ENCODE measurements at regions of chr1 and their contacts with region 1.

Region 1: GRCh38 chr1:149886396-149887195 is 12.8 kb upstream of the BOLA1 start:
- DNase-seq: peak; percentile 71
- ATAC-seq: peak; percentile 65
- H3K4me3 Mint-ChIP-seq: no peak overlapping the region
- H3K27ac Mint-ChIP-seq: no peak overlapping the region
- H3K4me1 Mint-ChIP-seq: peaks cover 4% of the 10 kb centered on the region
- H3K27me3 Mint-ChIP-seq: no peaks in the 10 kb centered on the region
- CTCF ChIP-seq: no peak

Region 2: GRCh38 chr1:149849947-149850360 is 36.6 kb before region 1 on chr1:
- CTCF ChIA-PET with region 1: no interaction called
- POLR2A ChIA-PET with region 1: interaction called, 51 read pairs
- DNase-seq: no peak
- ATAC-seq: no peak
- H3K4me3 Mint-ChIP-seq: peak overlapping the region; percentile 90
- H3K27ac Mint-ChIP-seq: peak overlapping the region; percentile 98
- H3K4me1 Mint-ChIP-seq: peaks cover 47% of the 10 kb centered on the region
- H3K27me3 Mint-ChIP-seq: no peaks in the 10 kb centered on the region
- CTCF ChIP-seq: no peak

Region 3: GRCh38 chr1:149916193-149916897 is 29.7 kb after region 1 on chr1:
- CTCF ChIA-PET with region 1: no interaction called
- POLR2A ChIA-PET with region 1: interaction called, 16 read pairs
- DNase-seq: no peak
- ATAC-seq: no peak
- H3K4me3 Mint-ChIP-seq: peak overlapping the region; percentile 91
- H3K27ac Mint-ChIP-seq: no peak overlapping the region; the same call in 1 of the 2 replicates
- H3K4me1 Mint-ChIP-seq: peaks cover 23% of the 10 kb centered on the region
- H3K27me3 Mint-ChIP-seq: no peaks in the 10 kb centered on the region
- CTCF ChIP-seq: no peak

Region 4: DNA sequence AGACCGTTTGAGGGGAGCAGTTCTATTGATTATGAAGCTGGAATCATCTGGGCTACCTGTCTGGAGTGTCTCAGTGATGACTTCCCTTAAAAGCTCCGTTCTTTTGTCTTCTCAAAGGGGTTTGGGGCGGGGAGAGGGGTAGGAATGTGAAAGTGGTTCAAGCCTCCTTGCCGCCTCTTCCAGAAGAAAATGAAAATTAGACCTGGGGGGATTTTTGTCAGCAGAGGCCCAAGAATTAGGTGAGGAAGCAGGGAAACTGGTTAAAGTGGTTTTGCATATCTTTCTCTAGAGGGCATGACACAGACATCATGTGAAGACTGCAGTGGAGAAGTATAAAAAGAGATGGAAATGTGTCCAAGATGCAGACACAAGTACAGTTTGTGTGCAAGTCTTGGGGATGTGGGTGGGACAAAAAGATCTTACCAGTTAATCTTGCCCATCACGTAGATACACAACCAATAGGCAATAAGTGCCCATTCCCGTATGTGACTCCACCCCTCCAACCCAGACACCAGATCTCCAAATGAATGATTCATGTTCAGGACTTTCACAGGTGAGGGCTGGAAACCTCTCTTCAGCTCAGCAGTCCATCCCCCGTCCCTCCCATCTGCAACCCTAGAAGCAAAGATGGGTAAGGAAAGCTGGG is 50.6 kb after region 1 on chr1:
- CTCF ChIA-PET with region 1: interaction called, 3 read pairs
- POLR2A ChIA-PET with region 1: interaction called, 16 read pairs
- DNase-seq: no peak
- ATAC-seq: peak; percentile 33
- H3K4me3 Mint-ChIP-seq: peak overlapping the region; percentile 77
- H3K27ac Mint-ChIP-seq: peak overlapping the region; percentile 94
- H3K4me1 Mint-ChIP-seq: peaks cover 58% of the 10 kb centered on the region
- H3K27me3 Mint-ChIP-seq: no peaks in the 10 kb centered on the region; the same call in 1 of the 2 replicates
- CTCF ChIP-seq: no peak

Region 5: DNA sequence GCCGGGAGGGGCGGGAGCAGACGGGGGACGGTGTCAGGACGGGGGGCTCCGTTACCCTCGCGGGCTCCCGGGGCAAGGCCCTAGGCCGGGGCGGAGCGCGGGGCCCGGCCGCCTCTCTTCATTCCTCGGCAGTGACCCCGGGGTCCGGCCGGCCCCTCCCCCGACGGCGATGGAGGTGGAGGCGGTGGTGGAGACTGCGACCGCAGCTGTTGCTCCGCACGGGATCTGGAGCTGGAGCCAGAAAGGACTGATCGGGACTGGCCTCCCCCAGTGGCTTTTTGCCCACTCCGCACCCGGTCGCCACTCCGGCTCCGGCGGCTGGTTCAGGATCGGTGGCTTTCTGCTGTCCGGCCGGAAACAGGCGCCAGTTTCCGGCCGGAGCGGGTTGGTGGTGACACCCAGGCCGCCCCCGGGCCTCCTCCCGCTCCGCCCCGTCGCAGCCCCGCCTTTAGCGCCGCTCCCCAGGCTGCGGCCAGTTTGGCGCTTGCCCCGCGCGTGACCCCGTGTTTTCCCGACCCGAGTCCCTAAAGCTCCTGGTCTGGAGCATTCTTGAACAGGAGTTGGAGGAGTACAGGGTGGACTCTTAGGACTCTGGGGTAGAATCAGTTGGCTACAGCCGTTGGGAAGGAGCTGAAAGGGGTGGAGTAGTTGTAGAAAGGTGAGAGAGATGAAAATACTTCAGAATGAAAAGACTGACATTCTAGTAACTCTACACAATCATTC is 124.0 kb after region 1 on chr1 and contains the start of gene OTUD7B:
- CTCF ChIA-PET with region 1: no interaction called
- POLR2A ChIA-PET with region 1: interaction called, 27 read pairs
- DNase-seq: peak; percentile 86
- ATAC-seq: peak; percentile 86
- H3K4me3 Mint-ChIP-seq: peak within 1 kb of the TSS; percentile 94
- H3K27ac Mint-ChIP-seq: peak within 1 kb of the TSS; percentile 98
- H3K4me1 Mint-ChIP-seq: peaks cover 22% of the 10 kb centered on the region
- H3K27me3 Mint-ChIP-seq: no peaks in the 10 kb centered on the region
- CTCF ChIP-seq: no peak
- total RNA-seq, gene OTUD7B: 19.4 to 21.0 TPM (median 19.5 TPM) in 3 replicates

Region 6: GRCh38 chr1:150021191-150021694 is 134.6 kb after region 1 on chr1:
- CTCF ChIA-PET with region 1: no interaction called
- POLR2A ChIA-PET with region 1: no interaction called
- DNase-seq: no peak
- ATAC-seq: no peak
- H3K4me3 Mint-ChIP-seq: no peak overlapping the region
- H3K27ac Mint-ChIP-seq: peak overlapping the region; percentile 43
- H3K4me1 Mint-ChIP-seq: peaks cover 22% of the 10 kb centered on the region
- H3K27me3 Mint-ChIP-seq: no peaks in the 10 kb centered on the region; the same call in 1 of the 2 replicates
- CTCF ChIP-seq: no peak

Region 7: DNA sequence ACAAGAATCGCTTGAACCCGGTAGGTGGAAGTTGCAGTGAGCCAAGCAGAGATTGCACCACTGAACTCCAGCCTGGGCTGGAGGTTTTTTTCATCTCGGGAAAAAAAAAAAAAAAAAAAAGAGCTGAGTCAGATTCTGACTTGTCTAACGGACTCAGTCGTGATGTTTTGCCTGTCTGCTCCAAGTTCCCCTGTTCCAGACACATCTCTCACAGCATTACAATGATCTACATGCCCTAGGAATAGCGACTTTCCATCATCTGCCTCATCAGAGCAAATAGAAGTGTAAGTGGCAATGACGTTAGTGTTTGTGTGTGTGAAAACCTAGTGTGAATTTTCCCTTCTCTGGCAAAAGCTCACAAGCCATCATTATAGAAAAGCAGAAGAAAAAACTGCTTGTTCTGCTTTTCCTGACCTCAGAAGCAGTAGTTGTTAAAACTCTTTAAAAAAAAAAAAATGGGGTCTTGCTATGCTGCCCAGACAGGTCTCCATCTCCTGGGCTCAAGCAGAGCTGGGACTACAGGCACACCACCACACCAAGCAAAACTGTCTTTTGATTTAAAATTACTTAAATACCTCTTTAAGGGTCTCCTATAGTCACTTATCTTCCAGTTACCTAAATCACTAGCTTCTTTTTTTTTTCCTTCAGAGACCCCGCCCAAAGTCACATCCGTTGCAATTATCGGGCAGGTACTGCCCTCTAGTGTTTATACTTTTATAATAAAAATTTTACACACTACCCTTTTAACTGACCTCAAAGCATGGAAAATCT is 300.4 kb after region 1 on chr1:
- CTCF ChIA-PET with region 1: interaction called, 25 read pairs
- POLR2A ChIA-PET with region 1: interaction called, 10 read pairs
- DNase-seq: no peak
- ATAC-seq: peak; percentile 65
- H3K4me3 Mint-ChIP-seq: no peak overlapping the region
- H3K27ac Mint-ChIP-seq: no peak overlapping the region
- H3K4me1 Mint-ChIP-seq: peaks cover 2% of the 10 kb centered on the region; the same call in 1 of the 2 replicates
- H3K27me3 Mint-ChIP-seq: no peaks in the 10 kb centered on the region
- CTCF ChIP-seq: peak; percentile 48; the same call in 1 of the 2 replicates

Measured in WTC11 (cell line).